IMR-90 (cell line): ENCODE measurements at regions of chr17 and their contacts with region 1.

Region 1: GRCh38 chr17:18183334-18184142 is at the start of gene ALKBH5:
- DNase-seq: peak; percentile 100
- ATAC-seq: peak; percentile 84
- H3K4me3 ChIP-seq: peak within 1 kb of the TSS; percentile 52
- H3K27ac ChIP-seq: peak within 1 kb of the TSS; percentile 95
- H3K4me1 ChIP-seq: peaks cover 30% of the 10 kb centered on the region
- H3K27me3 ChIP-seq: no peaks in the 10 kb centered on the region
- CTCF ChIP-seq: peak; percentile 51
- POLR2A ChIP-seq: peak; percentile 92
- RAD21 ChIP-seq: peak; percentile 11; the same call in 1 of the 2 replicates
- total RNA-seq, gene ALKBH5: 79.6 and 86.1 TPM in 2 replicates

Region 2: DNA sequence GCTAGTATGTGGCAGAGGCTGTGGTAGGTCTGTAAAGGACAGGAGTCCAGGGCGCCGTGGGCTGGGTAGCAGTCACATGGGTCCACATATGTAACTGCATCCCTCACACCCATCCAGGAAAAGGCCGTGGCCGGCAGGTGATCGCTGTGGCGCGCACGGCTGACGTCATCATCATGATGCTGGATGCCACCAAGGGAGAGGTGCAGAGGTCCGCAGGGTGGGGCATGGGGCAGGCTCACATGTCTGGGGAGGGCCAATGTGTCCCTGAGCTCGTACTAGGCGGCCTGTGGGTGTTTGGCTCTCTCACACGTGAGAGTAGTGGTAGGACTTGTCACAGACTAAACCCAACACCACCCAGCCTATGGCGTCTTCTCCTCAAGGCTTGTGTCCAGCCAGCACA is 84.0 kb before region 1 on chr17:
- CTCF ChIA-PET with region 1: no interaction called
- POLR2A ChIA-PET with region 1: no interaction called
- dilution Hi-C with region 1: no loop called
- in situ Hi-C with region 1: no loop called
- intact Hi-C with region 1: loop called (anchors 5 kb)
- DNase-seq: no peak
- ATAC-seq: no peak
- H3K4me3 ChIP-seq: no peak overlapping the region
- H3K27ac ChIP-seq: no peak overlapping the region
- H3K4me1 ChIP-seq: no peaks in the 10 kb centered on the region
- H3K27me3 ChIP-seq: no peaks in the 10 kb centered on the region
- CTCF ChIP-seq: no peak
- POLR2A ChIP-seq: no peak
- RAD21 ChIP-seq: no peak

Region 3: GRCh38 chr17:18141210-18141803 is 42.2 kb before region 1 on chr17:
- CTCF ChIA-PET with region 1: no interaction called
- POLR2A ChIA-PET with region 1: no interaction called
- dilution Hi-C with region 1: no loop called
- in situ Hi-C with region 1: no loop called
- intact Hi-C with region 1: loop called (anchors 2 kb)
- DNase-seq: peak; percentile 55
- ATAC-seq: peak; percentile 78
- H3K4me3 ChIP-seq: no peak overlapping the region
- H3K27ac ChIP-seq: no peak overlapping the region
- H3K4me1 ChIP-seq: no peaks in the 10 kb centered on the region
- H3K27me3 ChIP-seq: peaks cover 3% of the 10 kb centered on the region; the same call in 1 of the 2 replicates
- CTCF ChIP-seq: peak; percentile 66
- POLR2A ChIP-seq: no peak
- RAD21 ChIP-seq: peak; percentile 71

Region 4: DNA sequence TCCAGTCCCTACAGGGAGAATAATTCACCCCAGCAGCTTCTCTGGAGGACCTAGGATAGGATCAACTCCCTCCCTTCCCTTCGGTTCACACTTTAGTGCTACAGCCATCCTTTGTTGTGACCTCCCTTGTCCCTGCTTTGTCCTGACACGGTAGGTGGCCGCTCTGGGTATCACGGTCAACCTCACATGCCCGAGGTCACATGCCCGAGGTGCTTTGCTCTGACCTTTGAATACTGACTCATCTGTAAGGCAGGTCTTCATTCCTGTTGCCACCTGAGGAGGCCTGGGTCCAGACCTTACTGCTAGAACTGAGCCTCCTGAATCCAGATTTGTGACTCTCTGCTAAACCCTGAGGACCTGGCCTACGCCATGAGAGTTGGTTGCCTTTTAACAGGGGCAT is 19.8 kb after region 1 on chr17:
- CTCF ChIA-PET with region 1: no interaction called
- POLR2A ChIA-PET with region 1: interaction called, 12 read pairs
- dilution Hi-C with region 1: no loop called
- in situ Hi-C with region 1: no loop called
- intact Hi-C with region 1: no loop called
- DNase-seq: no peak
- ATAC-seq: no peak
- H3K4me3 ChIP-seq: no peak overlapping the region
- H3K27ac ChIP-seq: no peak overlapping the region
- H3K4me1 ChIP-seq: 0 out of 2 replicates have a peak, but pooled peaks cover 2% of the 10 kb centered on the region
- H3K27me3 ChIP-seq: no peaks in the 10 kb centered on the region
- CTCF ChIP-seq: no peak
- POLR2A ChIP-seq: no peak
- RAD21 ChIP-seq: no peak